Posterior cingulate gyrus (tissue), 11 donors: ENCODE measurements at regions of chr7 and their contacts with region 1.

Region 1: DNA sequence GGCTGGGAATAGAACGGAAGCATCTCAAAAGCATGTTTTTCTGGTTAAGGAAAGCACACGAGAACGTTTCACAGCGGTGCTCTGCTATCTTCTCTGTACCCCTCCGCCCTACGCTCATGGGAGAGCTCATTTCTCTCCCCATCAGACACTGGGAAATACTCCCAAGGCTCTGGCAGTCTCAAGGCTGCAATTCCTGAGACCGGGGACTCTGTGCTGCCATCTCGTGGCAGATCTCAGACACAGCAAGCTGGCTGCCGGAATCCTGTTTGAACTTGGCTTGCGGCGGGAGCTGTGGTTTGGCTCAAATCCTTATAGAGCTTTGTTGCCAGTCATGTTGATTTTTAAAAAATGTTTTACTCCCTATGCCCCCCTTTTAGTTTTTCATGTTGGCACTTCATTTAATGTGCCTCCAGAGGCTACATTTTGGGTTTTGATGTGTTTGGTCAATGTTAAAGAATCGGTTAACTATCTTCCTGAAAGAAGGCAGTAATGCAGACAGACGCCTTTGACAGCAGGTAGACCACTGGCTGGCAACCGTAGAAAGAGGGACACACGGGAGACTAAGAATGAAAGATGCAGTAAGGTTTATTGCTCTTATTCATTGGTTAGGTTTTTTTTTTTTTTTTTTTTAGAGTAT is 27.6 kb downstream of the BMPER start:
- DNase-seq: peak; percentile 71 to 98 (median 86)

Region 2: GRCh38 chr7:33185786-33186185 is 747.2 kb before region 1 on chr7:
- intact Hi-C with region 1: loop called (anchors 5 kb)
- DNase-seq: no peak